Gastrocnemius medialis (tissue), 4 donors: ENCODE measurements at regions of chr4 and their contacts with region 1.

Region 1: DNA sequence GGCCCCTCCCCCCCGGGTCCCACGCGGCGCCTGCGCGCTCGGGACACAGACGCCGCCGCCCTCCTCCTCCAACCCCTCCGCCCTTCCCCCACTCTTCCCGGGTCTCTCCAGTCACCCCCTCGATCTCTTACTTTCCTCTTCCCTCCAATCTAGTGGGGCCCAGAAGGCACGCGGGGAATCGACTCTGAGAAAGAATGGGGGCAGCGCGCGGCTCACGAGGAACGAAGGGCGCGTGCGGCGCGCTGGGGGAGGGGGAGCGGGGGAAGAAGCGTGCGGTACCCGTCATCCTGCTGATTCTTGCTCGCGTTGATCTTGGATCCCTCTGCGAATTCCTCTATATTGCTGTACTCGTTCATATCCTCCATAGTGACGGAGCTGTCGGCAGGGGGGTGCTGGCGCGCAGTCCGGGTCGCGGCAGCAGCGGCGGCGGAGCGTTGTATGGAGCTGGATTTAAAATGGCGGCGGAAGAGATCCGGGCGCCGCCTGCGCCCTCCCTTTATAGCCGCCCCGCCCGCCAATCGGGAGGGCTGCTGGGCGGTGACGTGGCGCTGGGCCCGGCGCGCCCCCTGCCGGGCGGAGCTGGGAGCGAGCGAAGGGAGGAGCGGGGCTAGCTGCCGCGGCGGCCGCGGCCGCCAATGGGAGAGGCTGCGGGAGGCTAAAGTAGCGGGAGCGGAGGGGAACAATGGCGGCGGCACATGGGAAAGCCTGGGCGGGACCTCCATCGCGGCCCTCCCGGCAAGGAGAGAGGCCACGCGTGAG is 1.1 kb downstream of the HNRNPDL start:
- DNase-seq: peak; percentile 84 to 91
- ATAC-seq: peak; percentile 74 to 76
- H3K4me3 ChIP-seq: peak overlapping the region; percentile 81 to 99 (median 96)
- H3K27ac ChIP-seq: peak overlapping the region; percentile 94 to 100 (median 98)
- H3K4me1 ChIP-seq: peaks cover 32 to 38% of the 10 kb centered on the region in 2 donors
- H3K27me3 ChIP-seq: no peaks in the 10 kb centered on the region
- CTCF ChIP-seq: peak; percentile 82 to 99 (median 98)
- POLR2A ChIP-seq: peak; percentile 90 to 94

Region 2: DNA sequence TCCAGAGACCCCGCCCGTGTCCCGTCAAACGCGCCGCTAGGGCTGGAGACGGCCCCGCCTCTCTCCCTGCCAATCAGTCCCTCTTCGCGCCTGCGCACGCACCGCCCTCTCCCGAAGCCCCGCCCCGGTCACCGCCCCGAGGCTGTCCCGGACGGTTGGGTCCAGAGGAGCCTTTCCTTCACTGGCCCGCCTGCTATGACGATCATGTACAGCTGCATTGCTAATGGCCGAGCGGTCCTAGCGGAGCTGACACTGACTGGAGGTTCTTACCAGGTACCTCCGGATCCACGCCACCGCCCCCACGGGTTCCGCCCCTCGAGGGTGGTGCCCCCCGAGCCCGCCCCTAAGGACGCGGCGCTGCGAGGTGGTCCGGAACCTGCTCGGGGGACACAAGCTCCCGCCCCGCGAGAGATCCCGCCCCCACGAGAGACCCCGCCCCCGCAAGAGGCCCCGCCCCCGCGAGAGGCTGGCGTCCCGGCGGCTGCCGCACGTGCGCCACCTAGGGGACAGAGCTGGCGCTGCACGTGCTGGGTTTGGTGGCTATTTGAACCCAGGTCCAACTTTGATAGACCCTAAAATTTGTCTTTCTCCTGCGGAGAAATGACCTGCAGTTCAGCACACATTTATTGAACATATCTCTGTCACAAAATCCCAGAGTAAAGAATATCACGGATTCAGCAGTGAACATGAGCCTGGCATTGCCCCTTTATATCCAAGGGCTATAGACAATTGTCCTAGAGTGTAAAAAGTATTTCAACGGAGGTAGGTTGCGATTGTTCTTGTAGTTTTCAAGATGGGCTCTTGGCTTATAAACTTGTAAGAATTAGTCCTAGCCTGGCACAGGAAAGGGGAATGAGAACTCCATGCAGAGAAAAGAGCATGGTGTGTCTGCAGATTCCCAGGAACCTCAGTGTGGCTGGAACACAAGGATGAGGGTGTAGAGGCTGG is 144.0 kb before region 1 on chr4:
- in situ Hi-C with region 1: loop called in 1 of 4 experiments (anchors 10 kb)
- intact Hi-C with region 1: loop called (anchors 10 kb)
- DNase-seq: peak; percentile 96 to 99
- ATAC-seq: peak; percentile 100
- H3K4me3 ChIP-seq: peak overlapping the region; percentile 58 to 68 (median 62)
- H3K27ac ChIP-seq: peak overlapping the region; percentile 67 to 81 (median 74)
- H3K4me1 ChIP-seq: peaks cover 0 to 3% of the 10 kb centered on the region in 2 donors
- H3K27me3 ChIP-seq: no peaks in the 10 kb centered on the region
- CTCF ChIP-seq: peak; percentile 71 to 97 (median 77)
- POLR2A ChIP-seq: no peak

Region 3: DNA sequence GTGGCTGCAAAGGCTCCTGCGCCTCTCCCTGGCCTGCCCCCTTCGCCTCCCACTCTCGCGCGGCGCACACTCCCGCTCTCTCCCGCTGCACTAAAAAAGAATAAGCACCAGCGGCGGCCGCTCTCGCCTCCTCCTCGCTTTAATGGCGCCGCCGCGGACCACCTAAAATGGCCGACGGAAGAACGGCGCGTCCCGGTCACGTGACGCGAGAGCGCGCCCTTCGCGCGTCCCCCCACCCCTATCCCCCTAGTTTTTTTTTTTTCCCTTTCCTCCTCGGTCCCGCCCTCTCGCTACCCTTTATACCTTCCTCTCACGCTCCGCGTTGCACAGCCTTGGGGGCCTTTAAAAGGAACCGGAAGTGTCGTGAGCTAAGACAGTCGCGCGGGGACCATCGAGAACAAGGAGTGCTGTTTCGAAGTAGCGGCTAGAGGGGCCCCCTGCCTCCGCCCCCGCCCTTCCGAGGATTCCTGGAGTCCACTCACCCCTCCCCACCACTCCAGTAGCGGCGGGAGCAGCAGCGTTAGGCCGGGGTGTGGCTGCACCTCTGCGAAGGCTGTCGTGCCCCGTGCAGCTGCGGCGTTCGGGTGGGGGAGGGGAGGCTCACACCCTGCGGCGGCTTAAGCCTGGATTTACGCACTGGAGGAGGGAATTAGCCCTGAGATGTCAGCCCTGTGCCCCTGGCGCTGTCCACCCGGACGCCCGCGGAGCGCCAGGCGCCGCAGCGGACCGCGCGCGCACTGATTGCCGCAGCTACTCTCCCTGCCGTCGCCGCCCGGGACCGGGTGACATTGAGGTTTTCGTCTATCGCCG is 55.1 kb before region 1 on chr4 and contains the start of gene HNRNPD:
- in situ Hi-C with region 1: loop called in 2 of 4 experiments (anchors 5 kb)
- intact Hi-C with region 1: loop called (anchors 1 kb)
- DNase-seq: peak; percentile 97 to 99
- ATAC-seq: peak; percentile 90 to 91
- H3K4me3 ChIP-seq: peak within 1 kb of the TSS; percentile 82 to 99 (median 96)
- H3K27ac ChIP-seq: peak within 1 kb of the TSS; percentile 99 to 100 (median 100)
- H3K4me1 ChIP-seq: peaks cover 42 to 44% of the 10 kb centered on the region in 2 donors
- H3K27me3 ChIP-seq: no peaks in the 10 kb centered on the region
- CTCF ChIP-seq: peak in 2 of 5 experiments; percentile 20 to 21
- POLR2A ChIP-seq: peak; percentile 92 to 95
- total RNA-seq, gene HNRNPD: 26.9 to 46.0 (median 37.4) TPM

Region 4: DNA sequence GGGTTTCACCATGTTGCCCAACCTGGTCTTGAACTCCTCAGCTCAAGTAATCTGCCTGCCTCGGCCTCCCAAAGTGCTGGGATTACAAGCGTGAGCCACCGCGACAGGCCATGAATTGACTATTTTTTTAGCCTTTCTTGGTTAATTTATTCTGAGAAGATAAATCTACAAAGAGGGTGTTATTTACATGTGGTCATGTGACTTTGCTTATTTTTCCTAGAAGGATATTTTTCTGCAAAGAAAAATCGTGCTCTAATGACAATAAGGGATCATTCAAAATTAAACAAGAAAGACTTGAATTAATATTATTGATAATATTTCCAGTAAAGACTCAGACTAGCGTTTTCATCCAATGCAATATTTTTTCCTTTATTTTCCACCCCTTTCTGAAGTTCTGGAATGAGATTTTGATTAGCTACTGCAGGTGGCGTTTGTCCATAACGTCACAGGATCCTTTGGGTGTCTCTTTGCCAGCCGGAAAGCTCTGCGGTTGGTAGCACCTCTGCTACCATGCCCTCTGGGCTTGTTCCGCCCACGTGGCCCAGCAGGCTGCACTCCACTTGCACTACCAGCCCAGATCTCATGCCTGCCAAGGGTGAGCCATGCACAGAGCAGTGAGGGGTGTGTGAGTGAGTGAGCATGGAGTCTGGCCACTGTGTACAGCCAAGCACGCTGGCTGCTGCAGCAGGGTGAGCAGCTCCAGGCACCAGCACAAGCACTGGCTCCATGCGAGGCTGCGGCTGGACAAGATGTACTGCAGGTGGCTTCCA is 49.0 kb before region 1 on chr4:
- in situ Hi-C with region 1: loop called in 3 of 4 experiments (anchors 5 kb)
- intact Hi-C with region 1: no loop called
- DNase-seq: peak; percentile 63 to 74
- ATAC-seq: peak; percentile 75 to 77
- H3K4me3 ChIP-seq: no peak overlapping the region
- H3K27ac ChIP-seq: peak overlapping the region; percentile 58 to 72 (median 70)
- H3K4me1 ChIP-seq: peaks cover 27 to 32% of the 10 kb centered on the region in 2 donors
- H3K27me3 ChIP-seq: no peaks in the 10 kb centered on the region
- CTCF ChIP-seq: no peak
- POLR2A ChIP-seq: no peak

Region 5: DNA sequence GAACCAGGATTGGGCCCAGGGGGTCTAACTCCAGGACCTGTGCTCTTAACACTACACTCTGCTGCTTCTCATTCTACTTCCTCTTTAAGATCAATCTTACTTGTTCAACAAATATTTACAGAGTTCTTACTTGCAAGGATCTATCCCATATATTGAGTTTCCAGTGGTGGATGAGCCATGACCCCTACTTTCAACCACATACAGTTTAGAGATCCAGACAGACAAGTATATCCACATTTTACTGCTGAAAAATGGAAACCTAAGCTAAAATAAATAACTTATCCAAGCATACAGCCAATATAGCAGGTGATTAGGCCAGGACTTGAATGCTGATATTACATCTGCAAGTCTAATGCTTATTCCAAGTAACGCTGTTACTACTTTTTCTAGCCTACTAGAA is 114.0 kb after region 1 on chr4:
- in situ Hi-C with region 1: no loop called
- intact Hi-C with region 1: no loop called
- DNase-seq: no peak
- ATAC-seq: no peak
- H3K4me3 ChIP-seq: no peak overlapping the region
- H3K27ac ChIP-seq: no peak overlapping the region
- H3K4me1 ChIP-seq: no peaks in the 10 kb centered on the region
- H3K27me3 ChIP-seq: no peaks in the 10 kb centered on the region
- CTCF ChIP-seq: no peak
- POLR2A ChIP-seq: no peak

Region 6: DNA sequence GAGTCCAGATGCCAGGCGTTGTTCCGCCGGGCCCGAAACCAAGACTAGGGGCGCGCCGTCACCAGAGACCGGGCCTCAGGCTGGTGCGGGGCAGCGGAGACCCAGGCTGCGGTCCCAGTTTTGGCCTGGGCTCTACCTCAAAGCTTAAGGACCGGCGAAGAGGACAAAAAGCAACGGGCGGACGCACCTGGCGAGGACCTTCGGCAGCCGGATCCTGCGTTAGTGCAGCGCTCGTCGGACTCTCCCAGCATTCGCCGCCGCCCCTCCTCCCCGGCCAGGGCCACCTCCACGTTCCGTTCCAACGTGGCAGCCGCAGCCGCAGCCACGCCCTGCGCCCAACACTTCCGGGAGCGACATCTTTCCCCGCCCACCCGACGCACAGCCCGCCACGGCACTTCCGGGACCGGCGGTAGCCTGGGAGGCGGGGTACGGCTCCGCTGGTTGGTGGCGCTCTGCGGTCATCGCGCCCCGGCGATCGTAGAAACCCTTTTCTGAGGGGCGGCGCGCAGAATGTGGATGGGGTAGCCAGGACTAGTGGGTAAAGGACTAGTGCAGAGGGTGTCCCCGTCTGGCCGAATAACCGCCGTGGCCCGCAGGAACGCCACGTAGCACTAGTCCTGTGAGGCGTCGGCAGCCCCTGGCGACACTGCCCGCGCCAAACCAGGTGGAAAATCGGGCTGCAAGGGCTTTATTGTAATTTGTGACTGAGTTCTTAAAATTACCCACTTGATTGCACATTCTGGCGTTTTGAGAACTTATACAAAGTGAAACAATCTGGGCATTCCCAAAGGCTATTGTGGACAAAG is 462.0 kb after region 1 on chr4 and contains the start of gene SEC31A:
- in situ Hi-C with region 1: loop called in 1 of 4 experiments (anchors 25 kb)
- intact Hi-C with region 1: loop called (anchors 2 kb)
- DNase-seq: peak; percentile 92 to 94
- ATAC-seq: peak; percentile 93 to 95
- H3K4me3 ChIP-seq: peak within 1 kb of the TSS; percentile 85 to 96 (median 88)
- H3K27ac ChIP-seq: peak within 1 kb of the TSS; percentile 96 to 97 (median 96)
- H3K4me1 ChIP-seq: peaks cover 32 to 34% of the 10 kb centered on the region in 2 donors
- H3K27me3 ChIP-seq: no peaks in the 10 kb centered on the region
- CTCF ChIP-seq: peak in 1 of 5 experiments; percentile 22
- POLR2A ChIP-seq: peak; percentile 93
- total RNA-seq, gene SEC31A: 95.2 to 112 (median 105) TPM

Region 7: GRCh38 chr4:82900331-82901128 is 471.4 kb after region 1 on chr4 and contains the start of gene THAP9:
- in situ Hi-C with region 1: loop called in 1 of 4 experiments (anchors 25 kb)
- intact Hi-C with region 1: loop called (anchors 1 kb)
- DNase-seq: peak; percentile 99
- ATAC-seq: peak; percentile 96
- H3K4me3 ChIP-seq: peak within 1 kb of the TSS; percentile 65 to 92 (median 82)
- H3K27ac ChIP-seq: peak within 1 kb of the TSS; percentile 94 to 98 (median 96)
- H3K4me1 ChIP-seq: peaks cover 32 to 34% of the 10 kb centered on the region in 2 donors
- H3K27me3 ChIP-seq: no peaks in the 10 kb centered on the region
- CTCF ChIP-seq: no peak
- POLR2A ChIP-seq: peak; percentile 78 to 89
- total RNA-seq, gene THAP9: 7.6 to 11.1 (median 8.4) TPM

Region 8: DNA sequence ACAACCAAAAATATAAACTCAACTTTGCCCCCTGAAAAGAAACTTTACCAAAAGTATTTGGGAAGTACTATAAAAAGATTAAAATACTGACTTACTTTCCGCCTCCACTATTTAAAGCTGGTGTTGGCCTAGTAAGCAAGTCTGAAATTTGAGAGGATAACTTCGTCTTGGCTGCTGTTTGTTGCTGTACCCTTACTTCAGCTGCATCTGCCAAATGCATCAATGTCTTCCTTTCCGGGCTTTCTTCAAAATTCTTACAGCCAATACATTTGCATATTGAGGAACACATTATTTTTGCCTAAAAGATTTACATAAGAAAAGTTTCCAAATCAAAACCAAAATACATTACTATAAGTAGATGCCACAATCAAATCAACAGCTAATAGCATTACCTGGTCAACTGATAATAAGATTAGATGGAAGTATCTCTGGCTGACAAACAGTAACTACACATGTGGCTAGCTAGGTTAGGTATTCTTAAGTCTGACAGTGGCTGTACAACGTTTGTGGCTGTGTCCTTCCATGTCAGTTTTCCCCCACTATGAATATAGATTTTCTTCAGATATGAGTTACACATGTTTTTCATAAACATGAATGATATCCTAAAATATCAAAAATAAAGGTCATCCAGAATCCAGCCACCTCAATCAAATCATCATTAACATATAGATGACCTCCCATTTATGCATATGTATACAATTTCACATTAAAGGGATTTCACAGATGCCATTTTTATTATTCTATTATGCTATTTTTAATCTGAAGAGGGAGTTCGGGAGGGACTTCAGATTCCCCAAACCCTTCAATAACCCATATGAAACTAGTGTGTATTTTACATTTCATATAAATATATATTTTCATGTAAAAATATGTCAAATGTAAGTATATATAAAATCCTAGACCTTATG is 502.0 kb after region 1 on chr4:
- in situ Hi-C with region 1: no loop called
- intact Hi-C with region 1: no loop called
- DNase-seq: no peak
- ATAC-seq: no peak
- H3K4me3 ChIP-seq: no peak overlapping the region
- H3K27ac ChIP-seq: no peak overlapping the region
- H3K4me1 ChIP-seq: peaks cover 11 to 13% of the 10 kb centered on the region in 2 donors
- H3K27me3 ChIP-seq: no peaks in the 10 kb centered on the region
- CTCF ChIP-seq: no peak
- POLR2A ChIP-seq: no peak

Region 9: DNA sequence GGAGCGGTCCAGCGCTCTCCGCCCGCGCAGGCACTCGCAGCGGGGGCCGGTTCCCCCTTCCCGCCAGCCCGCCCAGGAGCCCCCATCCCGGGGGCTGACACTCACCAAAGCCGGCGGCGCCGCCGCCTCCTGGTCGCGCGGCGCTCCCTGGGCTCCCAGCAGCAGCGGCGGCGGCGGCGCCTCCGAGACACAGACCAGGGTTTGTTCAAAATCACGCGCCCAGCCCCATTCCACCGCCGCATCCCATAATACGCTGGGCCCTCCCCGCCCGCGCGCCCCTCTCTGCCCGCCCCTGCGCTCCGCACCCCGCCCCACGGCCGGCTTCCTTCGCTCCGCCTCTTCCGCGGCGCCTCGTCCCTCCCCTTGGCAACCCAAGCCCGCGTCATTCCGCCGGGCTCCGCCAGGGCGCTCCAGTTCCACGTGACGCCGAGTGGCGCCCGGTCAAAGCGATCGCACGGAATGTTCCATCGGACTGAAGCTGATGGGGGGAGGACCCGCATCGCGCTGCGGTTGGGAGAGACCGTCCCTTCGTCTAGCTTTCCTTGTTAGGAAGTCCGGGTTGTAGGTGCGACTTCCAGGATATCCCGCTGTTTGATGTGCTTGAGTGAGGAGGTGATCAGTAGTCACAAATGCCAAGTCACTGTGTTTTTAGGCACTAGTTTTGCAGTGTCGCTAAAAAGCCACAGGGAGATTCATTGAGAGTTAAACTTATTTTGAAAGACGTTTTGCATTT is 583.7 kb after region 1 on chr4:
- in situ Hi-C with region 1: loop called in 1 of 4 experiments (anchors 25 kb)
- intact Hi-C with region 1: loop called (anchors 1 kb)
- DNase-seq: peak; percentile 93 to 96
- ATAC-seq: peak; percentile 90
- H3K4me3 ChIP-seq: peak overlapping the region; percentile 70 to 94 (median 79)
- H3K27ac ChIP-seq: peak overlapping the region; percentile 90 to 96 (median 94)
- H3K4me1 ChIP-seq: peaks cover 27 to 33% of the 10 kb centered on the region in 2 donors
- H3K27me3 ChIP-seq: no peaks in the 10 kb centered on the region
- CTCF ChIP-seq: peak; percentile 37 to 64 (median 53)
- POLR2A ChIP-seq: peak; percentile 86 to 93